Prostate gland (tissue), 2 donors: ENCODE measurements at regions of chr4 and their contacts with region 1.

Region 1: DNA sequence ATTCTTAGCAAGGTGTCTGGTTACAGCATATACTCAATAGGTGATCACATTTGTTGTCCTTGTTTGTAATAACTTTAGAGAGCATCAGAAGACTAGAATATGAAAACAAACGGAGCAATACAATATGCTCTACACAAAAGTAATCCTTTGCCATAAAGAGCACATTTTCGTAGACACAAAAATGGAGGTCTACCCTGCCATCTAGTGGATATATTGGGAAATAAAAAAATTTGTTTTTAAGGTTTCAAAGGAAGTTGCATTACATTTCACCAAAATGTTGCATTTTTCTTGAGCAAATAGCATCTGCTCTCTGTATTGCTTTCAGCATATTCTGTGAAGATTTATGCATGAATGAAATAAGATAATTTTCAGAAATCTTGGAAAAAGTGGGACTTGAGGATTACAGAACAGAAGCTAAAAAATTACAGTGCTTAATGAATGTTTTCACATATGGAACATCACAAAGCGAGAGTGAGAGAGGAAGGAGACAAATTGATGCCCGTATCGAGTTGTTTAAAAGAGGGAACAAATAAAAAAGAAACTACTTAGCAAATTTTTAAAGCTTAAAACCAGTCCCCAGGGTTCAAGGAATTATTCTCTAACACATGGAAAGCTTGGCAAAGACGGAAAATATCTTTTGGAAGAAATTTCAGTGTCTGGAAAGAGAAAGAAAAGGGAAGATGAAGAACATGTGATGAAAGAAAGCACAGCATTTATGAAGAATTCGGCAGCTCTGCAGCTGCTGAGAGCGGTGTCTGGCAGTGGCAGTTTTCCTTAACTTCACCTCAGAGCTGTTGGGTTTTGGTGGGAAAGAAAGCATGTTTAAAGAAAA is 390.1 kb downstream of the ANKRD50 start:
- DNase-seq: no peak
- H3K4me3 ChIP-seq: no peak overlapping the region
- H3K27ac ChIP-seq: no peak overlapping the region
- H3K4me1 ChIP-seq: no peaks in the 10 kb centered on the region
- H3K27me3 ChIP-seq: no peaks in the 10 kb centered on the region
- CTCF ChIP-seq: peak; percentile 53 to 71 (median 66)
- POLR2A ChIP-seq: no peak

Region 2: DNA sequence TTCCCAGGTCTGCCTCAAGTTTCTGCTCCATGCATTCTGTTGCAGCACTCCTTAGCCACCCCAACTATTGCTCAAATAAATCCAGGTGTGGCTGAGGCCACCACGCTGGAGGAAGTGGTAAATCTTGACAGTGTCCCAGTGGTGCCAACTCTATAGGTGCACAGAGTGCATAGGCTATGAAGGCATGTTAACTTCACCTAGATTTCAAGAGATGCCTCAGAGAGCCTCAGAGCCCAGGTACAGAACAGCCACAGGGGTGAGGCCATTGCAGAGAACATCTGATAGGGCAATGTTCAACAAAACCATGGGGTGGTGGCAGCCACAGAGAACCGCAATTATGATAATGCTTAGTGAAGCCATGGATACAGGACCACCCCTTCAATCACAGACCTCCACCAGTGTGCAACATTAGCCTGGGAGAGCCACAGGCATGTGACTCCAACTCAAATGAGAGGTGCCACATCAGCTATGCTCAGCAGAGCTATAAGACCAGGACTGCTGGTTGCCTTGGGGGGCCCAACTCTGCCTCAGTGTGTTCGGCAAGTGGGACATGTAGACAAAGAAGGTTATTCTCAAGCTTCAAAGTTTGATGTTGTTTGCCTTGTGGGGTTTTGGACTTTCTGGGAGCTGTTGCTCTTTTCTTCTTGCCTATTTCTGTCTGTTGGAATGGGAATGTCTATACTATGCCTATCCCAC is 78.6 kb before region 1 on chr4:
- intact Hi-C with region 1: no loop called
- DNase-seq: no peak
- H3K4me3 ChIP-seq: no peak overlapping the region
- H3K27ac ChIP-seq: no peak overlapping the region
- H3K4me1 ChIP-seq: no peaks in the 10 kb centered on the region
- H3K27me3 ChIP-seq: no peaks in the 10 kb centered on the region
- CTCF ChIP-seq: no peak
- POLR2A ChIP-seq: no peak

Region 3: GRCh38 chr4:124712372-124713184 is 390.1 kb after region 1 on chr4 and contains the start of gene ANKRD50:
- intact Hi-C with region 1: loop called (anchors 10 kb)
- DNase-seq: peak; percentile 83
- H3K4me3 ChIP-seq: peak within 1 kb of the TSS; percentile 86 to 94
- H3K27ac ChIP-seq: peak within 1 kb of the TSS; percentile 93 to 96
- H3K4me1 ChIP-seq: no peaks in the 10 kb centered on the region
- H3K27me3 ChIP-seq: no peaks in the 10 kb centered on the region
- CTCF ChIP-seq: no peak
- POLR2A ChIP-seq: peak; percentile 66
- total RNA-seq, gene ANKRD50: 28.7 to 33.8 TPM